Activated CD4-positive, alpha-beta T cell treated with anti-CD3 and anti-CD28 coated beads for 36 hours (primary cell): ENCODE measurements at regions of chr16 and their contacts with region 1.

Region 1: DNA sequence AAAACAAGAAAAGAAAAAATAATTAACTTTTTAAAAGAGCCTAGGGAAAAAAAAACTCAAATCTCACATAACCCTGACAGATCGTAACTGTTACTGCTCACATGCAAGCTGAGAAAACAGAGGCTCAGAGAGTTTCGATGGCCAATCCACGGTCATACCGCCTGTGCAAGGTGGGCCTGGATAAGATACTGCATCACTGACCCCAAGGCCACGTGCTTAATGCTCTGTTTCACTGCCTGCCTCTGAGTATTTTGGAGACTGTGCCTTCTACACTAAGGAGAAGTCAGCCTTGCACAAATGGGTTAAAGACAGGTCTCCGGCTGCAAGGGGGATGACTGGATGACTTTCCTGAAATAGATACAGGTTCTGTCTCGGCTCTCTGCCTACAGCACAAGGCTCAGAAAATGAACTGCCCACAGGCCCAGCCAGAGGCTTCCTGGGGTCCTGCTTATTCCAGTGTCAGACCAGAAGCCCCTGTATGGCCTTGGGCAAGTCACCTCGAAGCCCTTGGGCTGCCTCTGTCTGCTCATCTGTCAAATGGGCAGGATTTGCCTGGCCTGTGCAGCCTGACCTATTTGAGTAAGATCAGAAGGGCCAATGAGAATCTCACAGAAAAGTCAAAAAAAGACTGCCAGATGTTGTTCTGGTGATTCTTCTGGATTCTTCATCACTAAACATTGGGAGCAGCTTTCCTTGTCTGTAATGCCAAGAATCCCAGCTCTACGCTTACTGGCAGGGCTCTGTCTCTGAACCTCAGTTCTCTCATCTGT is 25.8 kb downstream of the CNGB1 start:
- DNase-seq: no peak
- ATAC-seq: no peak
- H3K4me3 Mint-ChIP-seq: no peak overlapping the region
- H3K27ac Mint-ChIP-seq: no peak overlapping the region
- H3K4me1 Mint-ChIP-seq: no peaks in the 10 kb centered on the region
- H3K27me3 Mint-ChIP-seq: no peaks in the 10 kb centered on the region

Region 2: DNA sequence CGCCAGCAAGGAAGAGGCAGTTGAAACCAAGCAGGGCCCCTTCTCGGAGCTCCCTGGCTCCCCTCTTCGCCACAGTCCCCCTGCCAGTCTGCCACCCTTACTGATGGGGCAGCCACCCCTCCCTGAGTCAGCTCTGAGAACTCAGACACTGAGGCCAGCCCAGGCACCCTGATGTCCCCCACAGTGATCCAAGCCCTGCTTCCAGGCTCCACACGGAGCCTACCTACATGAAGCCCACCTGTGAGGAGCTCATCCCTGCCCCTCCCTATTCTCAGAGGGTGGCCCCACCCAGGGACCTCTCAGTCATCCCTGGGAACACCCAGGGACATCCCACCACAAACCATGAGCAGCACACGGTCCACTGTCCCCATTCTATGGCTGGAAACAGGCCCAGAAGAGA is 16.9 kb after region 1 on chr16:
- CTCF ChIA-PET with region 1: no interaction called
- POLR2A ChIA-PET with region 1: no interaction called
- intact Hi-C with region 1: no loop called
- DNase-seq: no peak
- ATAC-seq: no peak
- H3K4me3 Mint-ChIP-seq: no peak overlapping the region
- H3K27ac Mint-ChIP-seq: no peak overlapping the region
- H3K4me1 Mint-ChIP-seq: no peaks in the 10 kb centered on the region
- H3K27me3 Mint-ChIP-seq: no peaks in the 10 kb centered on the region

Region 3: GRCh38 chr16:57972306-57972705 is 27.2 kb after region 1 on chr16:
- CTCF ChIA-PET with region 1: no interaction called
- POLR2A ChIA-PET with region 1: no interaction called
- intact Hi-C with region 1: loop called in 1 of 2 experiments (anchors 1 kb)
- DNase-seq: no peak
- ATAC-seq: no peak
- H3K4me3 Mint-ChIP-seq: no peak overlapping the region
- H3K27ac Mint-ChIP-seq: no peak overlapping the region
- H3K4me1 Mint-ChIP-seq: no peaks in the 10 kb centered on the region
- H3K27me3 Mint-ChIP-seq: no peaks in the 10 kb centered on the region